ENCODE measurements at regions of chr4 and their contacts with region 1.

Region 1: DNA sequence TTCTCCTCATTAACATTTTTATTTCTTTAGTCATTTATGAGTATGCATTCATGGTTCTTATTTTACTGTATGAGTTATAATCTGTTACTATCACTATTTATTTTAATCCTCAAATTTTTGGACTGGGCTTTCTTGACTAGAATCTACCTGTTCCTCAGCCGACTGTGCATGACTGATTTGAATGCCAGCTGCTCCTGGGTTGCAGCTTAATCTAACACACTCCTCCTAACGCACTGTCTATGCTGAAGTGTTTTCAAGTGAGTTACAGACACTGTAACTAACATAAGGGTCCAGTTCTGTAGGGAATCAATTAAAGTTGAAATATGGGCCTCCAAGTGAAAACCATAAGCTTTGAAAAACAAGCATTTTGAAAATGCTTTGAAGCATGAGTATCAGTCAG is 137.4 kb upstream of the ARSJ start:
- DNase-seq: no peak
- ATAC-seq: no peak
- H3K4me3 ChIP-seq: no peak overlapping the region
- H3K27ac ChIP-seq: no peak overlapping the region
- H3K4me1 ChIP-seq: no peaks in the 10 kb centered on the region
- H3K27me3 ChIP-seq: no peaks in the 10 kb centered on the region
- CTCF ChIP-seq: no peak
- EP300 ChIP-seq: no peak
- POLR2A ChIP-seq: no peak
- RAD21 ChIP-seq: no peak

Region 2: DNA sequence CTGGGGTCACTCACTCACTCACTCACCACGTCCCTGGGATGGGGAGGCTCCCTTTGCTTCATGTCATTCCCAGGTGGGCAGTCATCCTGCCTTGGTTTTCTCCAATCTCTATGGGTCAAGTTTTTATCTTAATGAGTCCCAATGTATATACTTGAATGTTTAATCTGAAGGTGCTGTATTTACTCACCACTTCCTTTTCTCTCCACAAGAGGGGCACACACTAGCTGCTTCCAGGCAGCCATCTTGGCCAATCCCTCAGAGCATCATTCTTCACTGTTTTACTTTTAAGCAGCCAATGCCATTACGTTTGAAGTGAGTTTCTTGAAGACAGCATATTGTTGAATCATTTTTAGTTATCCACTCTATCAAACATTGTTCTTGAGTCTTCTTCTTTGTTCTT is 16.0 kb after region 1 on chr4:
- CTCF ChIA-PET with region 1: interaction called, 10 read pairs
- POLR2A ChIA-PET with region 1: no interaction called
- RAD21 ChIA-PET with region 1: no interaction called
- SMC1A ChIA-PET with region 1: interaction called, 5 read pairs
- in situ Hi-C with region 1: no loop called
- intact Hi-C with region 1: no loop called
- DNase-seq: no peak
- ATAC-seq: peak; percentile 86
- H3K4me3 ChIP-seq: no peak overlapping the region
- H3K27ac ChIP-seq: no peak overlapping the region
- H3K4me1 ChIP-seq: no peaks in the 10 kb centered on the region
- H3K27me3 ChIP-seq: no peaks in the 10 kb centered on the region
- CTCF ChIP-seq: peak; percentile 14 to 49 (median 47); a peak in 5 of 6 replicates
- EP300 ChIP-seq: no peak
- POLR2A ChIP-seq: no peak
- RAD21 ChIP-seq: 0 out of 2 replicates have a peak, but pooled peaks have one; percentile 11

Measured in GM12878 (cell line).